Caco-2 (cell line): ENCODE measurements at regions of chr12 and their contacts with region 1.

Region 1: DNA sequence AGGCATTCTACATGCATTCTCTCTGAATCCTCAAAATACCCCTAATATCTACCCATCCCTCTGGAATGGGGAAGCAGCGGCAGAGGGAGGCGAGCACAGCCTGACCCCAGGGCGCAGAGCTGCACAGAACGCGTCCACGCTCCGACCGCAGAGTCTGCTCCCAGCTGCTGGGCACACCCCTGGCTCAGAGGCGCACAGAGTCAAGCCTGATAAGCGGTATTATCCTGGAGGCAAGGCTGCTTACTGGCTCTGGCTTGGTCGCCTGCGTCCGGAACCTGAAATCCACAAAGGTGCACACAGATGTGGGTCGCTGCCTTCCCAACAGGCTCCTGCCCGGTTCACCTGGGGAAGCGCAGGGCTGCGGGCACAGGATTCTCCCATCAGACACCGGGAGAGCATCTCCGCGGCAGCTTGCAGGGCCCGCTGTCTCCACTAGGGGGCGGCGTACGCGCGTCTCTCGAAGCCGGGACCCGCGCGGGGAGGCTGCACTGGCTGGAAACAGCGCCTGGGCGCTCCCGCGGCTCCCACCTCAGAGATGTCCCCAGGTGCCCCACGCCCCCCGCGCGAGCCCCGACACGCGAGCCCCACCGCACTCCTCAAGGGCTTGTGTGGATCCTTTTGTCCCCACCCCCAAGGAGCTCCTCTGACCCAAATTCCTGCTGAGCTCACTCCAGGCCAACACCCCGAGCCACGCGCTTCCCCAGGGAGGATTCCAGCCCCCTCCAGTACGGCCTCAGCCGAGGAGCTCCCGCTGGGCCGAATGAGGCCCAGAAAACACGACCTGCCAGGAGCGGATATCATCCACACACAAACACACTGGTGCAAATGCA is 120.1 kb upstream of the FZD10 start:
- DNase-seq: peak in 1 of 2 experiments; percentile 4
- H3K4me3 ChIP-seq: no peak overlapping the region
- H3K4me3 Mint-ChIP-seq: no peak overlapping the region
- H3K27ac Mint-ChIP-seq: no peak overlapping the region
- H3K4me1 ChIP-seq: peaks cover 5% of the 10 kb centered on the region; the same call in 1 of the 2 replicates
- H3K4me1 Mint-ChIP-seq: no peaks in the 10 kb centered on the region
- H3K27me3 ChIP-seq: no peaks in the 10 kb centered on the region
- H3K27me3 Mint-ChIP-seq: peaks cover 3% of the 10 kb centered on the region
- CTCF ChIP-seq: peak in 1 of 2 experiments; percentile 34

Region 2: GRCh38 chr12:130139567-130140547 is 97.7 kb after region 1 on chr12:
- CTCF ChIA-PET with region 1: no interaction called
- POLR2A ChIA-PET with region 1: no interaction called
- intact Hi-C with region 1: loop called (anchors 10 kb)
- DNase-seq: no peak
- H3K4me3 ChIP-seq: no peak overlapping the region
- H3K4me3 Mint-ChIP-seq: no peak overlapping the region
- H3K27ac Mint-ChIP-seq: no peak overlapping the region
- H3K4me1 ChIP-seq: no peaks in the 10 kb centered on the region
- H3K4me1 Mint-ChIP-seq: no peaks in the 10 kb centered on the region
- H3K27me3 ChIP-seq: no peaks in the 10 kb centered on the region
- H3K27me3 Mint-ChIP-seq: no peaks in the 10 kb centered on the region
- CTCF ChIP-seq: no peak

Region 3: GRCh38 chr12:130335517-130336392 is 293.6 kb after region 1 on chr12:
- CTCF ChIA-PET with region 1: no interaction called
- POLR2A ChIA-PET with region 1: no interaction called
- intact Hi-C with region 1: loop called (anchors 1 kb)
- DNase-seq: peak in 1 of 2 experiments; percentile 62
- H3K4me3 ChIP-seq: no peak overlapping the region
- H3K4me3 Mint-ChIP-seq: no peak overlapping the region
- H3K27ac Mint-ChIP-seq: no peak overlapping the region
- H3K4me1 ChIP-seq: 0 out of 2 replicates have a peak, but pooled peaks cover 3% of the 10 kb centered on the region
- H3K4me1 Mint-ChIP-seq: peaks cover 7% of the 10 kb centered on the region
- H3K27me3 ChIP-seq: no peaks in the 10 kb centered on the region
- H3K27me3 Mint-ChIP-seq: peaks cover 4% of the 10 kb centered on the region
- CTCF ChIP-seq: peak; percentile 50 to 59